ENCODE measurements at regions of chr15 and their contacts with region 1.

Region 1: DNA sequence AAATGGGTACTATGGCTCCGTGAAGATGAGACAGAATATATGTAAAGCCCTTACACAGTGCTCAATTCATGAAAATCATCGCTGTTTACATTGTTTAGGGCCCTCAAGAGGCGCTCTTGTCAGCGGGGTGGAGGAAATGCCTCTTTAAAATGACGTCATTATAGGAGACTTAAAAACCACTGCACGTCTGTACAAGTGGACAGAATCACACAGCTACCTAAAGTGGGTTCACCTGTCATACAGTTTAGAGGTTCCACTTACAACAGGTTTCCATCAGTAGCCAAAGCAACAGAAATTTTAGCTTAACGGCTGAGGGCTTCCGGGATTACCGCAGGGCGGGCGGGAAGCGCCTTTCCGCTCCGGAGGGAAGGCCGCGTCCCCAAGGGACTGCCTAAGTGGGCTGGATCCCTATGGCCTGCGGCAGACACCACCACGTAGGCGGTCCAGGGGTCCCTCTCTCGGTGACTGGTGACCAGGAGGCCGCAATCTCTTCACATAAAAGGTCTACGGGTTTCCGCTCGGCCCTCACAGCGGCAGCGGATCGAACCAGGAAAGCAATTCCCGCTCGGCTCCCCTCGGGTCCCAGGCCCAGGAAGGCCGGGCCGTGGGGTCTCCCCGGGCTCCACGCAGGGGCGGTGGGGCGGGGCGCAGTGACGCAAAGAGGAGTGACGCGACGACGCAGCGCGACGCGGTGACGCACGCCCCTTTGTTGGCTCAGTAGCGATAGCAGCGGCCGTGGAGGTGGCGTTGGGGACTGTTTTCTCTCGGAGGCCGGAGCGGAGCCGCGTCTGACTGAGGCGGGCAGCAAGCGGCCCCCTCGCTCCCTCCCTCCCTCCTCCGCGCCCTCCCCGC is at the start of gene ARIH1:
- DNase-seq: peak; percentile 99
- H3K4me3 ChIP-seq: peak within 1 kb of the TSS; percentile 84 to 91 (median 88)
- H3K27ac ChIP-seq: peak within 1 kb of the TSS; percentile 99 to 100 (median 100)
- H3K4me1 ChIP-seq: peaks cover 38 to 51% (median 47%) of the 10 kb centered on the region in 4 donors
- H3K27me3 ChIP-seq: no peaks in the 10 kb centered on the region
- CTCF ChIP-seq: peak in 2 of 3 experiments; percentile 5 to 12
- EP300 ChIP-seq: peak; percentile 82
- POLR2A ChIP-seq: peak; percentile 97
- total RNA-seq, gene ARIH1: 37.4 to 59.9 (median 43.3) TPM

Region 2: GRCh38 chr15:72098040-72098439 is 375.8 kb before region 1 on chr15:
- intact Hi-C with region 1: no loop called
- DNase-seq: no peak
- H3K4me3 ChIP-seq: no peak overlapping the region
- H3K27ac ChIP-seq: no peak overlapping the region
- H3K4me1 ChIP-seq: peaks cover 1 to 17% (median 3%) of the 10 kb centered on the region in 4 donors
- H3K27me3 ChIP-seq: no peaks in the 10 kb centered on the region
- CTCF ChIP-seq: no peak
- EP300 ChIP-seq: no peak
- POLR2A ChIP-seq: no peak

Region 3: GRCh38 chr15:72345280-72345679 is 128.6 kb before region 1 on chr15:
- intact Hi-C with region 1: no loop called
- DNase-seq: no peak
- H3K4me3 ChIP-seq: no peak overlapping the region
- H3K27ac ChIP-seq: no peak overlapping the region
- H3K4me1 ChIP-seq: peaks cover 0 to under 1% (median 0%) of the 10 kb centered on the region in 4 donors
- H3K27me3 ChIP-seq: no peaks in the 10 kb centered on the region
- CTCF ChIP-seq: no peak
- EP300 ChIP-seq: no peak
- POLR2A ChIP-seq: no peak

Region 4: DNA sequence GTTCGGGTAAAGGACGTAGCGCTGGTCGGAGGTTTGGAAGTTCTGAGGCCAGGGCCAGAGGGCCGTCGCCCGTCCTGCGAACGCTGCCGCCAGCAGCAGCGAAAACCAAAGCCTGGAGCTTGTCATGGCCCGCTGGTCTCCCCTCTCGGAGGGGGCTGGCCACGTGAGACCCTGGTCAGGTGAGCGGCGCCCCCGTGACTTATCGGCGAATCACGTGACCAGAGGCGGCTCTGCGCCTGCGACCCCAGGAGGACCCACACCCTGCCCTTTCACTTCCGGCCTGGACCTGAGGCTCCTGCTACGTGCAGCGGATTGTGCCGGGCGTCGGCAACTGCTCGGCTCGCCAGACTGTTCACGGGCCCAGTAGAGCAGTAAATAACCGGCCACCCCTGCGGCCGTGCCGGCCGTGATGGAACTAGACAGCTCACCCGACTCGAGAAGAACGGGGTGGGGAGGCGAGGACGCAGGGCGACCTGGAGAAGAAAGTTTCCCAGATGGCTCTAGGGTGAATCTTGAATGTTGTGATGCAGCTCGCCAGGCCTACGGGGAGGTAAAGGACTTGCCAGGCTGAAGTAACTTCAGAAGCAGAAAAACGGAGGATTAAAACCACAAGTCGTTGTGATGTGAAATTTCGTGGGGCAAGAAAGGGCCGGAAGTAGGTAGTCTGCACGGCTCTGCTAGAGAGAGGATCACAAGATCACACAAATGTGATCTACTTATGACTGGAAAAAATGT is 97.8 kb before region 1 on chr15 and contains the start of gene HEXA:
- intact Hi-C with region 1: loop called (anchors 5 kb)
- DNase-seq: peak; percentile 99
- H3K4me3 ChIP-seq: peak within 1 kb of the TSS; percentile 78 to 90 (median 84)
- H3K27ac ChIP-seq: peak within 1 kb of the TSS; percentile 87 to 91 (median 88)
- H3K4me1 ChIP-seq: peaks cover 31 to 47% (median 46%) of the 10 kb centered on the region in 4 donors
- H3K27me3 ChIP-seq: no peaks in the 10 kb centered on the region
- CTCF ChIP-seq: peak in 1 of 3 experiments; percentile 15
- EP300 ChIP-seq: no peak
- POLR2A ChIP-seq: peak; percentile 62
- total RNA-seq, gene HEXA: 51.0 to 59.3 (median 53.6) TPM

Region 5: DNA sequence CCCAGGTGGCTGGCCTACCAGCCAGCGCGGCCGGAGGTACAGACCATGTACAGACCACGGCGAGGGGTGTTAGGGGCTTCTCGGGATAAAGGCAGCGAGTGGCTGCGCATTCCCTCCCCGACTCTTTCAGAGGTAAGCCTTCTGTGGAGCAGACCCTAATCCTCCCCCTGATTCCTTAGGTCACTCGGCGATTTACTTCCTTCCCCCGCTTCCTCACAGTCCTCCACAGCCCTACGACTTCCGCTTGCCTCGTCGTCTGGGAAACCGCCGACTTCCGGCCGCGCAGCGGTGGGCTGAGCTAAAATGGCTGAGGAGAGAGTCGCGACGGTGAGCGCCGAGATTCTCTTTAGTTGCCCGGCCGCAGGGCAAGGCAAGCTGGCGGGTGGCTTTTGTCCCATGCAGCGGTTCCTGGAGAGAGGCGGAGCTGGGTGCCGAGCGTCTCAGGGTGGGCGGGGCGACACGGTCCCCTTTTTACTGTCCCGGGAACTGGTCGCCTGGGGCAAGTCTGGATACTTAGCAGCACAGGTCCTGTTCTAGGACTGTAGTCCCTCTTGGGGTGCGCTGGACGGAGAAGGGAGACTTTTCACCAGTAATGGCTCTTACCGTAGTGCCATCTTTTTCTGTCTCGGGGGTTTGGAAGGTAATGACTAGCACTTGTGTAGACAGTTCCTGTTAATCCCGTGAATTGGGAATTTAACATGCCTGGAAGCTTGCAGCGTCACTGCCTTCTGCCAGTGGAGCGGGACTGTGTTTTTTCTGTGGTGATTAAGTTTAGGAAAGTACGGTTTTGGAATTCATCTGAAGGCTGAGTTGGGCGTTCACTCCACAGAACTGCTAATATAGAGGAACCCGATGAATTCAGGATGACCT is 212.3 kb after region 1 on chr15 and contains the starts of genes BBS4 and HIGD2B:
- intact Hi-C with region 1: loop called (anchors 10 kb)
- DNase-seq: peak; percentile 97
- H3K4me3 ChIP-seq: peak within 1 kb of the TSS; percentile 66 to 83 (median 73)
- H3K27ac ChIP-seq: peak within 1 kb of the TSS; percentile 85 to 93 (median 90)
- H3K4me1 ChIP-seq: peaks cover 15 to 18% (median 16%) of the 10 kb centered on the region in 4 donors
- H3K27me3 ChIP-seq: no peaks in the 10 kb centered on the region
- CTCF ChIP-seq: no peak
- EP300 ChIP-seq: no peak
- POLR2A ChIP-seq: peak; percentile 3
- total RNA-seq, gene BBS4: 13.9 to 27.9 (median 19.0) TPM
- total RNA-seq, gene HIGD2B: not detected

Measured in esophagus muscularis mucosa (tissue), 4 donors.